ENCODE measurements at regions of chr3 and their contacts with region 1.

Region 1: GRCh38 chr3:172673210-172673679 is 37.6 kb downstream of the NCEH1 start:
- DNase-seq: no peak
- H3K4me3 ChIP-seq: no peak overlapping the region
- CTCF ChIP-seq: peak; percentile 65

Region 2: GRCh38 chr3:172646439-172647015 is 26.7 kb before region 1 on chr3:
- CTCF ChIA-PET with region 1: interaction called, 27 read pairs
- POLR2A ChIA-PET with region 1: no interaction called
- DNase-seq: no peak
- H3K4me3 ChIP-seq: no peak overlapping the region
- CTCF ChIP-seq: no peak

Region 3: GRCh38 chr3:172653081-172653480 is 20.2 kb before region 1 on chr3:
- CTCF ChIA-PET with region 1: interaction called, 27 read pairs
- POLR2A ChIA-PET with region 1: no interaction called
- DNase-seq: no peak
- H3K4me3 ChIP-seq: no peak overlapping the region
- CTCF ChIP-seq: no peak

Region 4: GRCh38 chr3:172685346-172686214 is 12.3 kb after region 1 on chr3:
- CTCF ChIA-PET with region 1: interaction called, 29 read pairs
- POLR2A ChIA-PET with region 1: no interaction called
- DNase-seq: no peak
- H3K4me3 ChIP-seq: no peak overlapping the region
- CTCF ChIP-seq: no peak

Region 5: GRCh38 chr3:172692751-172693338 is 19.6 kb after region 1 on chr3:
- CTCF ChIA-PET with region 1: interaction called, 29 read pairs
- POLR2A ChIA-PET with region 1: no interaction called
- DNase-seq: no peak
- H3K4me3 ChIP-seq: no peak overlapping the region
- CTCF ChIP-seq: no peak

Region 6: GRCh38 chr3:172710664-172711453 is 37.6 kb after region 1 on chr3 and contains the start of gene NCEH1:
- CTCF ChIA-PET with region 1: interaction called, 11 read pairs
- POLR2A ChIA-PET with region 1: no interaction called
- DNase-seq: peak; percentile 94
- H3K4me3 ChIP-seq: peak within 1 kb of the TSS; percentile 94
- CTCF ChIP-seq: peak; percentile 82

Region 7: DNA sequence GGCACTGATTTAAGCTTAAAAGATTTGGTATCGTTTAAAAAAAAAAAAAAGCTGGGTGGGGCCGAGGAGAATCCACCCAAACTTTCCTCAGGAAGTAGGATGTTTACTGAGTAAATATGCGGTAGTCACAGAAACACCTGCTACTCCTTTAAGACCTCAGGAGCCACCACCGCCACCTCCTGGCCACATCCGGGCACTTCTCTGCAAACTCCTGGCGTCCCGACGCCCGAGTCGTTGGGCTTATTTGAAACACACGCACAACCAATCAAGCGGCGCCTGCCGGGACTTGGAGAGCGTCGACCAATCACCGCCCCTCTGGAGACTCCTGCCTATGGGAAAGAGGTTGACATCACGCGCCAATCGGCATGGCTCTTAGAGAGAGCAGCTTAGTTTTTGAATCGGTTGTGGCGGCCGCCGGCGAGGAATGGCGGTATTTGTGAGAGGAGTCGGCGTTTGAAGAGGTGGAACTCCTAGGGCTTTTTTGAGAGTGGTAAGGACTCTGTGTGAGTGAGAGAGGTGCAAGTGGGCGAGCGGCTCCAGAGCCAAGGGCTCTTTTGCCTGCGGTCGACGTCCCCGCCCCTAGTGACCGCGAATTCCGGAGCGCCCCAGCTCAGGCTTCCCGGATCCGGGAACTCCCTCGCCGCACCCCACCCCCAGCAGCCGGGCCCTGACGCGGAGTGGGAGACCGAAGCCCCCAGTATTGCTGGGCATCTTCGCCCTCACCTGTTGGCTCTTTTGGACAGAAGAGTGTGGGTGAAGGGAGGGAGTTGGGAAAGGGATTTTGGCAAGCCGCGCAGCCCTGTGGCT is 77.3 kb after region 1 on chr3 and contains the start of gene ECT2:
- CTCF ChIA-PET with region 1: interaction called, 25 read pairs
- POLR2A ChIA-PET with region 1: interaction called, 3 read pairs
- DNase-seq: peak; percentile 97
- H3K4me3 ChIP-seq: peak within 1 kb of the TSS; percentile 90
- CTCF ChIP-seq: peak; percentile 82

Measured in AG04449 (cell line).